ENCODE measurements at regions of chr1 and their contacts with region 1.

Region 1: GRCh38 chr1:47644212-47644573 is 206.3 kb downstream of the FOXD2 start:
- DNase-seq: no peak
- H3K4me3 ChIP-seq: no peak overlapping the region
- H3K27ac ChIP-seq: no peak overlapping the region
- H3K4me1 ChIP-seq: no peaks in the 10 kb centered on the region
- H3K27me3 ChIP-seq: peaks cover 0 to 3% (median 0%) of the 10 kb centered on the region in 4 experiments; a peak in 1 of 7 replicates
- CTCF ChIP-seq: no peak
- EP300 ChIP-seq: no peak
- POLR2A ChIP-seq: no peak
- RAD21 ChIP-seq: no peak

Region 2: GRCh38 chr1:47578026-47578720 is 66.0 kb before region 1 on chr1:
- CTCF ChIA-PET with region 1: no interaction called
- POLR2A ChIA-PET with region 1: no interaction called
- DNase-seq: no peak
- H3K4me3 ChIP-seq: no peak overlapping the region
- H3K27ac ChIP-seq: no peak overlapping the region
- H3K4me1 ChIP-seq: peaks cover 4 to 17% (median 9%) of the 10 kb centered on the region in 4 experiments
- H3K27me3 ChIP-seq: no peaks in the 10 kb centered on the region
- CTCF ChIP-seq: no peak
- EP300 ChIP-seq: no peak
- POLR2A ChIP-seq: no peak
- RAD21 ChIP-seq: no peak

Region 3: DNA sequence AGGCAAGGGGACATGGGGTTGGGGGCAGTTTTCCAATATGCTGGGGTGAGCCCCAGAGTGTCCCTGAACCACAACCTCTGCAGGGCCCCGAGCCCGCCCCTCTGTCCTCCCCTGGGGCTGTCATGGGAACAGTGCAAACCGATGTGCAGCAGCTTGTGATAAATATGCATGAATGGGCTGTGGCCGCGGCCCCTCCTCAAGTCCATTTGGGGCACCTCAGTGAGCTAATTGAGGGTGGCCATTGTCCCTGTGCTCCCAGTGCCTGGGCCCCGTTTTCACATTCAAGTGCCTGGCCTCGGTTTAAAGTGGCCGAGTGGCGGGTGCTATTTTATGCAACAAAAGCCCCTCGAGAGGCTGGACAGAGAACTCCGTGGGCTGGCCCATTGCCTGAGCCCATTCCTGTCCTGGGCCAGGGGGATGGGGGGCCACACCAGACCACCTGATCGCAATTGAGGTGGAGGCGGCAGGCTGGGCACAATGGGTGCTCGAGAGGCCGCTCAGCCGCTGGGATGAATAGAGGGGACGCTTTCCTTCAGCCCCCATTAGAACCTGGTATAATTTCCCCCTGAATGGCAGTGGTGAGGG is 12.7 kb before region 1 on chr1:
- CTCF ChIA-PET with region 1: interaction called, 17 read pairs
- POLR2A ChIA-PET with region 1: no interaction called
- DNase-seq: no peak
- H3K4me3 ChIP-seq: no peak overlapping the region
- H3K27ac ChIP-seq: no peak overlapping the region
- H3K4me1 ChIP-seq: peaks cover 0 to 3% (median 0%) of the 10 kb centered on the region in 4 experiments; a peak in 2 of 7 replicates
- H3K27me3 ChIP-seq: no peaks in the 10 kb centered on the region
- CTCF ChIP-seq: no peak
- EP300 ChIP-seq: no peak
- POLR2A ChIP-seq: no peak
- RAD21 ChIP-seq: no peak

Region 4: DNA sequence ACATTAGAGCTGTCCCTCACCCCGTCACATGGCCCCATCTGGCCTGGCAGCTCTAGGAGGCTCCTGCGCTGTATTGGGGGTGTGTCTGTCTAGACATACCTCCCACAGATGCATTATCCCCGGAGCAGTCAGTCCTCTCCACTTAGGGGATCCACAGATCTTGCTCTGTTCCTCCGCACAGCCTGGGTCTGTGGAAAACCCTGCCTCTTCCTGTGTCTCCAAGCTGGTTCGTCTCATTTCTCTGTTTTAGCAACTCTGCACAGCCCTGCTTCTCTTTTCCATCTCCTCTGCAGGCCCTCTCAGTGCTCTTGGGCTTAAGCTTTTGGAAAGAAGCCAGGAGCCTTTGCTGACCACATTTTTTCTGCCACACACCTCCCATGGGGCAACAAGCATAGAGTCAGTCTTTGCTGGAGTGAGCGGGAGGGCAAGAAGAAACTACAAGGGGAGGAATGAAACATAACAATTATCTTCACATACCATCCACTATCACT is 35.2 kb after region 1 on chr1:
- CTCF ChIA-PET with region 1: no interaction called
- POLR2A ChIA-PET with region 1: no interaction called
- DNase-seq: peak in 1 of 2 experiments; percentile 29
- H3K4me3 ChIP-seq: no peak overlapping the region
- H3K27ac ChIP-seq: no peak overlapping the region
- H3K4me1 ChIP-seq: peaks cover 0 to 4% (median 0%) of the 10 kb centered on the region in 4 experiments; a peak in 1 of 7 replicates
- H3K27me3 ChIP-seq: peaks cover 0 to 7% (median 2%) of the 10 kb centered on the region in 4 experiments; a peak in 2 of 7 replicates
- CTCF ChIP-seq: no peak
- EP300 ChIP-seq: no peak
- POLR2A ChIP-seq: no peak
- RAD21 ChIP-seq: no peak